Activated B cell treated with CpG ODN at 0.5 μM for 24 hours (primary cell): ENCODE measurements at regions of chr19 and their contacts with region 1.

Region 1: DNA sequence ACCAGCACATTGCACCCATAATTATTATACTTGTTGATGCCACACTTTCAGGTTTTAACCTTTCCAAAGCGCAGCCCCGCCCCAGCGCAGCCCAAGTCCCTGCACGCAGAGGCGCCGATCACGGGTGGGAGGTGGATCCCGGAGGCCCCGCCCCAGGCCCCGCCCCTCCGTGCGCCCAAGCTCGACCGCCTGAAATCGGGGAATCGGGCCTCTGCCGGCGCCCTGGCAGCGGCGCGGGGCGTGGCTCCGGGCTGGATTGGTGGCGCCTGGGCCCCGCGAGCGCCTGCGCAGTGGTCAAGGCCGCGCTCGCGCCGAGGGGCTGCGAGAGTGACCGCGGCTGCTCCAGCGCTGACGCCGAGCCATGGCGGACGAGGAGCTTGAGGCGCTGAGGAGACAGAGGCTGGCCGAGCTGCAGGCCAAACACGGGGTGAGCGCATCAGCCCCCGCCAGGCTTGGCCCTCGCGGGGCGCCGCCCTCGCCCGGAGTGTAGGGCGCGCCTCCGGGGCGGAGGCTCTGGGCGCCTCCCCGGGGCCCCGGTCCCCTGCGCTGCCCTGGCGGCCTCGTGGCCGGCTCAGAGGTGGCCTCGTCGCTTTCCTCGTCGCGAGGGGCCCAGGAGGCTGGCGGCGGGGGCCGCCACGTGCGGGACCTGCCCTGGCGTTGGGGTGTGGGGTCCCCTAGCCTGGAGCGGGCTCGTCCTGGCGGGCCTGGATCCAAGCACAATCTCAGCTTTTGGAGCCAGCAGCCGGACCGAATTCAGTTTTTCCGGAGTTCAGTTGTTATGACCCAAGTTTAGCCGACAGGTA is at the start of gene PDCD5:
- DNase-seq: peak; percentile 91
- ATAC-seq: peak; percentile 95
- H3K4me3 Mint-ChIP-seq: peak within 1 kb of the TSS; percentile 91
- H3K27ac Mint-ChIP-seq: peak within 1 kb of the TSS; percentile 85
- H3K4me1 Mint-ChIP-seq: peaks cover 16% of the 10 kb centered on the region
- H3K27me3 Mint-ChIP-seq: no peaks in the 10 kb centered on the region
- CTCF ChIP-seq: no peak
- total RNA-seq, gene PDCD5: 58.2 and 64.9 TPM in 2 replicates

Region 2: DNA sequence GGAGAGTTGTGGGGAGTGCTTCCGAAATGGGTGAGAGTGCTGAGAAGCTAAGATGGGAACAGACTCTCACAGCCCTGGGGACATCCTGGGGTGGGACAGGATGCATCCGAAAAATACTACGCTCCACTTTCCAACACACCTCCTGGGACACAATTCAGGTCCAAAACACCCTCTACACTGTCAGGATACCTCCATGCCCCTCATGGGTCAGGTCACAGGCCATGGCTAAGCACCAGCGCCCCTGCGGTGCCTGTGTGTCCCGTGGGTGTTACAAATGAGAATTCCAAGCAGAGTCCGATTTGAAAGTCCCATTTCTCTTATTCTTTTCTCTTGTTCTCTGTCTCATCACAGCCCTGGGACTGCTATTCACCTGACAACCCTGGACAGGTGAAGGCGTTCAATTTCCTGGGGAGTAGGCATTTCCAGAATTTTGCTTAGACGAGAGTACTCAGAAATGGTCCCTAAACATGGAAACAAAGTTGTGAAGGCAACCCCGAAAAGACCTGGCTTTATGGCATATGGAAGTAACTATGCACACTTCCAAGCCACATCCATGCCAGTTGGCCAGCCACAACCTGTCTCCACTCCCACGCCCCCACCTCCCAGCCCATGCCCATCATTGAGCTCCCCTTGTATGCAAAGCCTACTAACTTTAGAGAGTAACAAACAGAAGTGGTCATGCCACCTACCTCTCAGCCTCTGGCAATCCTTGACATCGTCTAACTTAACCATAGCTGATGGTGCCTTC is 323.6 kb before region 1 on chr19:
- CTCF ChIA-PET with region 1: no interaction called
- POLR2A ChIA-PET with region 1: no interaction called
- intact Hi-C with region 1: no loop called
- DNase-seq: no peak
- ATAC-seq: no peak
- H3K4me3 Mint-ChIP-seq: no peak overlapping the region
- H3K27ac Mint-ChIP-seq: no peak overlapping the region
- H3K4me1 Mint-ChIP-seq: no peaks in the 10 kb centered on the region
- H3K27me3 Mint-ChIP-seq: no peaks in the 10 kb centered on the region
- CTCF ChIP-seq: no peak

Region 3: DNA sequence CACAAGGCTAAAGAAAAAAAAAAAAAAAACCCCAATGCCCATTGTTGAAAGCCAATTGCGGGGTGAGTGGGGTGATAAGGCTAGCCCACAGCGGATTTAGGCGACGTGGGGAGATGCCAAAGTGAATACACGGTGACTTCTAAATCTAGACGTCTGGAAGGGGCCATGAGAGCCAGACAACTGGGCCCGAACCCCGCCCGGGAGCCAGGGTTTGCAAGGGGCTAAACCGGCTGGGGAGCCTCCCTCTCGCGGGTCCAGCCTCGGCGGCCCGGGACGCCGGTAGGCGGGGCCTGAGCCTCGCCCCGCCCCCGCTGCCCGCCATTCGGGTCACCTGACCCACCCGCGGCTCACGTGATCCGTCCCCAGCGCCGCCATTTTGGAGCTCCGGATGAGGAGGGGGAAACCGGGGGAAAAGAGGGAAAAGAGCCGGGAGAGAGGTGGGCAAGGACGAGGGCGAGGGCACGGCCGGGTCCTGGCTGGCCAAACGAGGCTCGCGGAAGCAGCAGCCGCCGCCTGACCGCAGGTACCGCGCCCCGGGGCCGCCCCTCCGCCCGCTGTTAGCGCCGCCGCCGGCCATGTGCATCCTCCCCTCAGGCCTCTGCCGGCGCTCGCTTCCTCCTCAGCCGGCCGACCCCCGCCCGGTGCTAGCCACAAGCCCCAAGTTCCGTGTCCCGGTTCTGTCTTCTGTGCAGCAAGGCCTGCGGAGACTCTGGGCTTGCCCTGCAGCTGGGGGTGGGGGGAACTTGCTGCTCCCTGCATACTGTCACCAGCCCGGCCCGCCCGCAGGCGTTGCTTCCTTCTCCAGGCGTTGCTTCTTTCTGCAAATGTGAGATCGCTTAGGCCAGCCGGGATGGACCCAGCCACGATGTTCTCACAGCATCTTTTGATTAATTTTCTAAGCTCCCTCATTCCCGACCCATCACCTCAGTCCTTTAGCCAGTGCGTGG is 235.6 kb before region 1 on chr19 and contains the start of gene ZNF507:
- CTCF ChIA-PET with region 1: no interaction called
- POLR2A ChIA-PET with region 1: interaction called, 3 read pairs
- intact Hi-C with region 1: loop called (anchors 1 kb)
- DNase-seq: peak; percentile 84
- ATAC-seq: peak; percentile 86
- H3K4me3 Mint-ChIP-seq: peak within 1 kb of the TSS; percentile 98
- H3K27ac Mint-ChIP-seq: peak within 1 kb of the TSS; percentile 92
- H3K4me1 Mint-ChIP-seq: peaks cover 36% of the 10 kb centered on the region
- H3K27me3 Mint-ChIP-seq: no peaks in the 10 kb centered on the region
- CTCF ChIP-seq: no peak
- total RNA-seq, gene ZNF507: 35.3 and 38.6 TPM in 2 replicates

Region 4: DNA sequence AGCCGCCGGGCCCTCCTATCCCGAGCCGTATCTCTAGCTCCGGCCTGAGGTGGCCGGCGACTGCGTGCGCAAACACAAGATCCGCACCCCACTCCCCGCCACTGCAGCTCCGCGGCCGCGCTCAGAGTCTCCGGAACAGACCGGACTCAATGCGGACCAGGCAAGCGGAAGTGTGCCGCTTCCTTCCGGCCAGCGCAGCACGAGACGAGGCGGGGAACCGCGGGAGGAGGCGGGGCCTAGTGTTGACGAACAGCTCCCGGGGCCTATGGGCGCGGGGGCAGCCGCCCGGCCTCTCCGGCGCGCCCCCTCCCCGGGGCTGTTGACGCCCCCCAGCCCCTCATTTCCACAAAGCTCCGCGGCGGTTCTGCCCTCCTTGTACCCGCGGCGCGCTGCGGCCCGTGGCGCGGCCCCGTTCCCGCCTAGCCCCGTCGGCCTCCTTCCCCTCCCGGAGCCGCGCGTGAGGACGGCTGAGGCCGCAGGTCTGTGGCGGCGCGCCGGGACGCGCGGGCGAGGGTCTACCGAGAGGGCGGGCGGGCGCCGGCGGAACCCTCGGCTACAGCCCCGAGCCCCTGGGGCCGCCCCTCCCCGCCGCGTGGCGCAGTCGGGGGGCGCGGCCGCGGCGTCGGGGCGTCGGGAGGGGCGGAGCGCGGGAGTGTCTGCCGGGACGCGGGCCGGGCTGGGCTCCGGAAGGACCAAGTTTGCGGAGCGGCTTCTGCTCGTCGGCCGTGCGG is 175.5 kb before region 1 on chr19 and contains the start of gene DPY19L3:
- CTCF ChIA-PET with region 1: no interaction called
- POLR2A ChIA-PET with region 1: interaction called, 11 read pairs
- intact Hi-C with region 1: loop called (anchors 1 kb)
- DNase-seq: peak; percentile 93
- ATAC-seq: peak; percentile 91
- H3K4me3 Mint-ChIP-seq: peak within 1 kb of the TSS; percentile 91
- H3K27ac Mint-ChIP-seq: peak within 1 kb of the TSS; percentile 93
- H3K4me1 Mint-ChIP-seq: peaks cover 16% of the 10 kb centered on the region
- H3K27me3 Mint-ChIP-seq: no peaks in the 10 kb centered on the region
- CTCF ChIP-seq: no peak
- total RNA-seq, gene DPY19L3: 22.1 and 29.8 TPM in 2 replicates

Region 5: DNA sequence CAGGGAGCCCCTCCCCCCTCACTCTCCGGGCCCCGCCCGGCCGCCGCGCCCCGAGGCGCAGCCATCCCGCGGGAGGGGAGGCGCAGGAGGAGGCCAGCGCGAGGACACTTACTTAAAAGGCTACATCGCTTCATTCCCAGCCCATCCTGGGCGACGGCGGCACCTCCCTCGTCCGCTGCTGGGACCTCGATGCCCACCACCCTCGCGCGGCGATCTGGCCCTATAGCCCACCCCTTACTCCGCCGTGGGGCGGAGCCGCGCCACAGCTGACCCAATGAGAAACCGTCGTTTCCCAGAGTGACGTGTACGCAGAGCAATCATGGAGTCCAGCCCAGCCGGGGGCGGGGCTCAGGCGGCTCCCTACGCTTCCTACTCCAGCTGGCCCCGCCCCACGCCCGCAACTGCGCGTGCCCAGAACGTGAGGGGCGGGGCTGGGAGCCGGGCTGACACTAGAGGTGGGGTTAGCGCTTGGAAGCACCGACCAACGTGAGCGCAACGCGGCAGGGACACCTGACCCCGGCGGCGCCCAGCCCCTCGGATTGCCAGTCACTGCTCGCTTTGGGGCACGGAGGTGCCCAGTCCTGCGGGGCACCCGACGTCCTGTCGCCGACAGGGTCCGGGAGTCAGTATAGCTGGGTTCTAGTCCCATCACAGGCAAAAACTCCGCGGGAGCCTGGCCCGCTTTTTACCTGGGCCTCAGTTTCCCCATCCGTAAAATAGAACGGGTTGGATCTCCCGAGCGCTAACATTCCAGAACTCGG is 94.0 kb after region 1 on chr19 and contains the start of gene ANKRD27:
- CTCF ChIA-PET with region 1: no interaction called
- POLR2A ChIA-PET with region 1: no interaction called
- intact Hi-C with region 1: loop called (anchors 1 kb)
- DNase-seq: peak; percentile 99
- ATAC-seq: peak; percentile 96
- H3K4me3 Mint-ChIP-seq: peak within 1 kb of the TSS; percentile 91
- H3K27ac Mint-ChIP-seq: peak within 1 kb of the TSS; percentile 84
- H3K4me1 Mint-ChIP-seq: peaks cover 27% of the 10 kb centered on the region
- H3K27me3 Mint-ChIP-seq: peaks cover 10% of the 10 kb centered on the region
- CTCF ChIP-seq: no peak
- total RNA-seq, gene ANKRD27: 33.1 and 44.7 TPM in 2 replicates

Region 6: GRCh38 chr19:32691291-32691951 is 110.3 kb after region 1 on chr19 and contains the start of gene NUDT19:
- CTCF ChIA-PET with region 1: no interaction called
- POLR2A ChIA-PET with region 1: interaction called, 3 read pairs
- intact Hi-C with region 1: loop called (anchors 1 kb)
- DNase-seq: peak; percentile 74
- ATAC-seq: peak; percentile 94
- H3K4me3 Mint-ChIP-seq: peak within 1 kb of the TSS; percentile 85
- H3K27ac Mint-ChIP-seq: peak within 1 kb of the TSS; percentile 70
- H3K4me1 Mint-ChIP-seq: peaks cover 41% of the 10 kb centered on the region
- H3K27me3 Mint-ChIP-seq: no peaks in the 10 kb centered on the region
- CTCF ChIP-seq: no peak
- total RNA-seq, gene NUDT19: 8.5 and 9.0 TPM in 2 replicates

Region 7: DNA sequence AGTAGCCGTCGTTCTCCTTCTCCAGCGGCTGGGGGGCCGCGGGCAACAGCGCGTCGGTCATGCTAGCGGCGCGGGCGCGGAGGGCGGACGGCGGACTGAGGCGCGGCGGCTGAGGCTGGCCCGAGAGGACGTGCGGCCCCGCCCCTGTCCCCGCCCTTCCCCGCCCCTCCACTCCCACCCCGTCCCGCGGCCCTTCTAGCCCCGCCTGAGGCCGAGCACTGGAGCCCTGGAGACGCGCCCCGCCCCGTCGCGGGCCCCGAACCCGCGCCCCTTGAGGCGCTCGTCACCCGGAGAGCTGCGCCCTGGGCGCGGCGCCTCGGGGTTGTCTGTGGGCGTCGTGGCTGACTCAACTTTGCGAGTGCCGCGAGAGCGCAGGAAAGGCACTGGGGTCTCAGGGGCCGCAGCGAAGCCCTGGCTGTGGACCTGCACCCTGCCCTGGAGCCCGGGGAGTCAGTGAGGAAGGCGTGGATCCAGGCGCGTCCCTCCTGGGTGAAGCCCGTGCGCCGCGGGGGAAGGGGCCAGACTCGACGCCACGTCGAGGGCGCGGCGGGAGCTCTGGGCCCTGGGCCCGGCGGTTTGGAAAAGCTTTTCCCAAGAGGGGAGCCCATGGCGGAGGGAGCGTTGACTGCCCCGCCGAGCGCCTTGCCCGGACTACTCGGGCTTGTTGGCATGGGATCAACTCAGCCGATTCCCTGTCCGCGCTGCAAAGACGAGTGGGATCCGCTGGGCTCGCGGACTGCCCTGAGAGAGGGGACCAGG is 483.9 kb after region 1 on chr19 and contains the start of gene RHPN2:
- CTCF ChIA-PET with region 1: no interaction called
- POLR2A ChIA-PET with region 1: no interaction called
- intact Hi-C with region 1: loop called (anchors 5 kb)
- DNase-seq: peak; percentile 53
- ATAC-seq: peak; percentile 89
- H3K4me3 Mint-ChIP-seq: peak within 1 kb of the TSS; percentile 76
- H3K27ac Mint-ChIP-seq: no peak within 1 kb of the TSS
- H3K4me1 Mint-ChIP-seq: peaks cover 9% of the 10 kb centered on the region
- H3K27me3 Mint-ChIP-seq: peaks cover 5% of the 10 kb centered on the region
- CTCF ChIP-seq: no peak
- total RNA-seq, gene RHPN2: 1.0 and 1.7 TPM in 2 replicates